ENCODE measurements at regions of chr2 and their contacts with region 1.

Region 1: GRCh38 chr2:48414980-48415835 is 114.7 kb upstream of the STON1 start:
- DNase-seq: peak; percentile 44
- ATAC-seq: peak; percentile 50

Region 2: GRCh38 chr2:48107326-48107925 is 307.8 kb before region 1 on chr2:
- intact Hi-C with region 1: loop called (anchors 5 kb)
- DNase-seq: no peak
- ATAC-seq: no peak

Region 3: GRCh38 chr2:48328159-48328809 is 86.9 kb before region 1 on chr2:
- intact Hi-C with region 1: loop called (anchors 10 kb)
- DNase-seq: no peak
- ATAC-seq: no peak

Region 4: GRCh38 chr2:48369971-48370370 is 45.2 kb before region 1 on chr2:
- intact Hi-C with region 1: loop called (anchors 2 kb)
- DNase-seq: no peak
- ATAC-seq: no peak

Region 5: GRCh38 chr2:48589170-48589767 is 174.1 kb after region 1 on chr2:
- intact Hi-C with region 1: no loop called
- DNase-seq: peak; percentile 37
- ATAC-seq: no peak